A549 (cell line): ENCODE measurements at regions of chrX and their contacts with region 1.

Region 1: GRCh38 chrX:153649178-153649914 is 2.3 kb downstream of the DUSP9 start:
- DNase-seq: peak; percentile 57 to 69
- ATAC-seq: peak; percentile 55 to 77; a peak in 5 of 6 replicates
- H3K4me3 ChIP-seq: no peak overlapping the region
- H3K27ac ChIP-seq: no peak overlapping the region
- H3K4me1 ChIP-seq: peaks cover 13% of the 10 kb centered on the region; the same call in 1 of the 3 replicates
- CTCF ChIP-seq: peak; percentile 31
- EP300 ChIP-seq: no peak
- POLR2A ChIP-seq: no peak
- RAD21 ChIP-seq: peak; percentile 58 to 65; a peak in 4 of 5 replicates

Region 2: GRCh38 chrX:153627675-153628111 is 21.7 kb before region 1 on chrX:
- CTCF ChIA-PET with region 1: interaction called, 18 read pairs
- POLR2A ChIA-PET with region 1: interaction called, 5 read pairs
- DNase-seq: no peak
- ATAC-seq: no peak
- H3K4me3 ChIP-seq: no peak overlapping the region
- H3K27ac ChIP-seq: no peak overlapping the region
- H3K4me1 ChIP-seq: peaks cover 9% of the 10 kb centered on the region
- CTCF ChIP-seq: no peak
- EP300 ChIP-seq: no peak
- POLR2A ChIP-seq: no peak
- RAD21 ChIP-seq: no peak

Region 3: GRCh38 chrX:153635788-153636622 is 13.3 kb before region 1 on chrX:
- CTCF ChIA-PET with region 1: interaction called, 33 read pairs
- POLR2A ChIA-PET with region 1: no interaction called
- DNase-seq: peak; percentile 69 to 79
- ATAC-seq: peak; percentile 82 to 98
- H3K4me3 ChIP-seq: no peak overlapping the region
- H3K27ac ChIP-seq: no peak overlapping the region
- H3K4me1 ChIP-seq: no peaks in the 10 kb centered on the region
- CTCF ChIP-seq: peak; percentile 41; the same call in 2 of the 3 replicates
- EP300 ChIP-seq: no peak
- POLR2A ChIP-seq: no peak
- RAD21 ChIP-seq: peak in 1 of 2 experiments; percentile 34; a peak in 2 of 5 replicates